ENCODE measurements at regions of chr4 and their contacts with region 1.

Region 1: GRCh38 chr4:77075869-77076799 is at the start of gene CCNI:
- DNase-seq: peak; percentile 84 to 95 (median 90)
- ATAC-seq: peak; percentile 71 to 82 (median 77)
- H3K4me3 ChIP-seq: peak within 1 kb of the TSS; percentile 73 to 93
- H3K4me3 Mint-ChIP-seq: peak within 1 kb of the TSS in 2 of 3 donors; percentile 99 to 100
- H3K27ac ChIP-seq: peak within 1 kb of the TSS; percentile 100
- H3K27ac Mint-ChIP-seq: peak within 1 kb of the TSS; percentile 100
- H3K4me1 ChIP-seq: peaks cover 20 to 37% of the 10 kb centered on the region in 2 experiments
- H3K4me1 Mint-ChIP-seq: peaks cover 31 to 50% (median 43%) of the 10 kb centered on the region in 3 donors
- H3K27me3 ChIP-seq: no peaks in the 10 kb centered on the region
- H3K27me3 Mint-ChIP-seq: peaks cover 0 to 3% of the 10 kb centered on the region in 2 donors
- total RNA-seq, gene CCNI: 229 to 359 (median 256) TPM

Region 2: DNA sequence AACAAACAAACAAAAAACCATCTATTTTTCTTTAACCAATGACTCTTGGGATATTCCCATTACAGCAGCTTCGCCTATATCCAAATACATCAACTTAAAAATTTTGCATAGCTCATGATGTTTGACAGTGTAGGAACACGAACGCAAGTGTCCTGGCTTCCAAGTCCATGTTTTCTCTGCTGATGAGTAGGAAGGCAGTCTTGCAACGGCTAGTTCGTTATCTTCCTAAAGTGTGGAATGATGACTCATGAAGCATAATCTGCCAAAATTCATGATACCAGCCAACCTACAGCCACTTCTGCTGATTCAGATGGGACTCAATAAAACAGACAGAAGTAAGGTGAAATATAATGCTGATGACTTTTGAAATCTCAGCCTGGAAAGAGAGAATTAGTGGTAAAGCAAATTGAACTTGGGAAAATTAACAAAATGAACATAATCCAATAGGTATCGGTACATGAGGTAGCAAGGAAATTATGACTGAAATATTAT is 133.0 kb before region 1 on chr4:
- CTCF ChIA-PET with region 1: no interaction called
- POLR2A ChIA-PET with region 1: interaction called in 1 of 2 experiments, 16 read pairs
- DNase-seq: no peak
- ATAC-seq: no peak
- H3K4me3 ChIP-seq: no peak overlapping the region
- H3K4me3 Mint-ChIP-seq: no peak overlapping the region
- H3K27ac ChIP-seq: no peak overlapping the region
- H3K27ac Mint-ChIP-seq: no peak overlapping the region
- H3K4me1 ChIP-seq: peaks cover 0 to 2% of the 10 kb centered on the region in 2 experiments
- H3K4me1 Mint-ChIP-seq: no peaks in the 10 kb centered on the region
- H3K27me3 ChIP-seq: no peaks in the 10 kb centered on the region
- H3K27me3 Mint-ChIP-seq: no peaks in the 10 kb centered on the region

Region 3: GRCh38 chr4:76957004-76957738 is 119.0 kb before region 1 on chr4:
- CTCF ChIA-PET with region 1: no interaction called
- POLR2A ChIA-PET with region 1: interaction called in 1 of 2 experiments, 10 read pairs
- DNase-seq: no peak
- ATAC-seq: no peak
- H3K4me3 ChIP-seq: no peak overlapping the region
- H3K4me3 Mint-ChIP-seq: no peak overlapping the region
- H3K27ac ChIP-seq: no peak overlapping the region
- H3K27ac Mint-ChIP-seq: no peak overlapping the region
- H3K4me1 ChIP-seq: peaks cover 0 to 2% of the 10 kb centered on the region in 2 experiments
- H3K4me1 Mint-ChIP-seq: peaks cover 13 to 29% (median 20%) of the 10 kb centered on the region in 3 donors
- H3K27me3 ChIP-seq: no peaks in the 10 kb centered on the region
- H3K27me3 Mint-ChIP-seq: no peaks in the 10 kb centered on the region